Activated CD4-positive, alpha-beta memory T cell treated with anti-CD3 and anti-CD28 coated beads for 36 hours (primary cell): ENCODE measurements at regions of chr12 and their contacts with region 1.

Region 1: DNA sequence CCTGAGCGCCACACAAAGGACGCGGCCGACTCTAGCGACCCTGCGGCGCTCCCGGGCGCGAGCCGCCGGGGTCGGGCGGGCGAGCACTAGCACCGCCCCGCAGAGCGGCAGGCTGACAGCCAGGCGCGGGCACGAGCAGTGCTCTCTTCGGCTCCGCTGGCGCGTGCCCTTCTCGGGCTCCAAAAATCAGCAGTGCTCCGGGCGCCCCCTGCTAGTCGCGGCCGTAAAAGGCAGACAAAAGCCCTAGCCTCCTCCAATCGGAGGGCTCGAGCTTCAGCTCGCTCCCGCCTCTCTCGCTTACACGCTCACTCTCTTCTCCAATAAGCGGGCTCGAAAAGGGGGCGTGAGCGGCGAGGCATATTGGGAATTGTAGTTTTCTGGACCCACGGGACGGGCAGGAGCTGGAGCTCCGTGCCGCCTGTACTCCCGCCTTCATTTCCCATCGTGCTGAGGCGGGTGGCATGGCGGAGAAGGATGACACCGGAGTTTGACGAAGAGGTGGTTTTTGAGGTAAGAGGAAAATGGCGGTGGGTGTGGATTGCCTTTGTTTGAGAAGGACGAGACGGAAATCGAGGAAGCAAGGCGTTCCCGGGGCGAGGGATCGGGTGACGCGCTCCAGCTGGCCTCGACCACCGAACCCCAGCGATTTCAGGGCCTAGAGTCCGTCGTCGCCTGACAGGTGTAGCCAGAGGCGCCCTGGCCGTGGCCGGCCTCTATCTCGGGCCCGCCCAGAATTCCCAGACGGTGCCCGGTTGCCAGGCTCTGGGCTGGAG is at the starts of genes FGD6 and VEZT:
- DNase-seq: peak; percentile 99
- H3K4me3 Mint-ChIP-seq: peak within 1 kb of the TSS; percentile 89
- H3K27ac Mint-ChIP-seq: peak within 1 kb of the TSS; percentile 95
- H3K4me1 Mint-ChIP-seq: peaks cover 35% of the 10 kb centered on the region
- H3K27me3 Mint-ChIP-seq: no peaks in the 10 kb centered on the region
- total RNA-seq, gene FGD6: 0.78 to 1.1 TPM
- total RNA-seq, gene VEZT: 50.7 to 54.4 TPM

Region 2: GRCh38 chr12:94954029-94954685 is 263.4 kb before region 1 on chr12:
- CTCF ChIA-PET with region 1: no interaction called
- POLR2A ChIA-PET with region 1: no interaction called
- intact Hi-C with region 1: no loop called
- DNase-seq: no peak
- H3K4me3 Mint-ChIP-seq: no peak overlapping the region
- H3K27ac Mint-ChIP-seq: no peak overlapping the region
- H3K4me1 Mint-ChIP-seq: no peaks in the 10 kb centered on the region
- H3K27me3 Mint-ChIP-seq: peaks cover 6% of the 10 kb centered on the region

Region 3: DNA sequence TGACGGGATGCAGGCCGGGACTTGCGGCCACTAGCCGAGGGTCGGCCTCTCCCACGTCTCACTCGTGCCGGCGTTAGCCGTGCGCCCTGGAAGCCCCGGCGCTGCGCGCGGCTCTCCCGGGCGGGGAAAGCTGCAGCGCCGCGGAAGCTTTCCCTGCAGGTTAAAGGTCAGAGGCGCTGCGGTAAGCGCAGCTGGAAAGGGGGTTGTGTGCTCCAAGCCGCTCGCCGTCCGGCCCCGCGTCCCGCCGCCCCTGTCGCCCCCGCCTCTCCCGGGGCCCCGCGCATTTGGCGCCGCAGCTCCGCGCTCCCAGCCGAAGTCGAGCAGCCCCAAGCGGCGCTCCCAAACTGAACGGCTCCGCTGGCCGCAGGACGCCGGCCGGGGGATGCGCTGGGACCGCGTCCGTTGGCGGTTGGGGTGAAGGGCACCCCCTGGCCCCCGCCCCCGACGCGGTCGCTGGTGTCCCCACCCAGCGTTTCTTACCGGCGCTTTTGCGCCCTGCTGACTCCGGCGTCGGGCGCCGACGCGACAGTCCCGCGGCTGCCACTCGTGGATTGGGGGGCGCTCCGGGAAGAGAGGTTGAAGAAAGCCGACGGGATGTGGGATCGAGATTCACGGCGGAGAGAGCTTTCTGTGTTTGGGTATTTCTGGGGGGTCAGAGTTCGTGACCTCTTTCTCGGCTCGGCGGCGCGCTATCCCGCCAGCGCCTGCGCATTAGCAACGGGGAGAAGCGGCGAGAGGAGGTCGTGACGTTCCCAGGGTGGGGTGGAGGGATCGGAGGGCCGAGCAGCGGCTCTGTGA is 144.5 kb before region 1 on chr12 and contains the start of gene NR2C1:
- CTCF ChIA-PET with region 1: interaction called, 18 read pairs
- POLR2A ChIA-PET with region 1: interaction called, 11 read pairs
- intact Hi-C with region 1: loop called (anchors 1 kb)
- DNase-seq: peak; percentile 96
- H3K4me3 Mint-ChIP-seq: peak within 1 kb of the TSS; percentile 89
- H3K27ac Mint-ChIP-seq: peak within 1 kb of the TSS; percentile 89
- H3K4me1 Mint-ChIP-seq: peaks cover 20% of the 10 kb centered on the region
- H3K27me3 Mint-ChIP-seq: no peaks in the 10 kb centered on the region
- total RNA-seq, gene NR2C1: 25.5 to 27.1 TPM

Region 4: GRCh38 chr12:95117178-95117599 is 100.4 kb before region 1 on chr12:
- CTCF ChIA-PET with region 1: interaction called, 19 read pairs
- POLR2A ChIA-PET with region 1: no interaction called
- intact Hi-C with region 1: loop called (anchors 1 kb)
- DNase-seq: peak; percentile 53
- H3K4me3 Mint-ChIP-seq: no peak overlapping the region
- H3K27ac Mint-ChIP-seq: no peak overlapping the region
- H3K4me1 Mint-ChIP-seq: peaks cover 5% of the 10 kb centered on the region
- H3K27me3 Mint-ChIP-seq: no peaks in the 10 kb centered on the region

Region 5: DNA sequence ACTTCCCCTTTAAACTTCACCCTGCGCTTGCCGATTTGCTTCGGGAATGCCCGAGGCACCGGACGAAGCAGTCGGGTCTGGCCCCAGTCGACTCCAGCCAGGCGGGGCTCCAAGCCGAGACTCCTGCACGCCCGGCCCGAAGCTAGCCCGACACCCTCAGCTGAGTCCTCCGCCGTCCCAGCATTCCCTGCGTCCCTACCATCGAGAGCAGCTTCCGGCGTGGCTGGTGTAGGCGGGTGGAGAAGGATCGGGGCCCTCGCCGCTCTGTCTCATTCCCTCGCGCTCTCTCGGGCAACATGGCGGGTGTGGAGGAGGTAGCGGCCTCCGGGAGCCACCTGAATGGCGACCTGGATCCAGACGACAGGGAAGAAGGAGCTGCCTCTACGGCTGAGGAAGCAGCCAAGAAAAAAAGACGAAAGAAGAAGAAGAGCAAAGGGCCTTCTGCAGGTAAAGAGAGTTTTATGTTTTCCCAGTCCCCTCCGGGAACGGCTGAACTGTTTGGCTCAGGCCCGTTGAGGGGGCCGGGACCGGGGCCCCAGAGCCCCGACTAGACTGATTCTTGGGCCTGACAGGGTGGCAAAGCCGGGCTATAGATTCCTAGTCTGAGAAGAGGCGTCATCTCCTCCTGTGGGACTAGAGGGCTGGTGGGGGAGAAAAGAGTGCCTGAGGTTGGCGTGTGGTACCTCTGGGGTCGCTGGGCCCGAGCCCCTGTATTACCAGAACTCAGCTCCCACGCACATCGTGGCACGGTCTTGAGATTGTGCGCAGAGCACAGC is 256.5 kb after region 1 on chr12 and contains the start of gene METAP2:
- CTCF ChIA-PET with region 1: interaction called, 9 read pairs
- POLR2A ChIA-PET with region 1: interaction called, 16 read pairs
- intact Hi-C with region 1: loop called (anchors 1 kb)
- DNase-seq: peak; percentile 97
- H3K4me3 Mint-ChIP-seq: peak within 1 kb of the TSS; percentile 100
- H3K27ac Mint-ChIP-seq: peak within 1 kb of the TSS; percentile 97
- H3K4me1 Mint-ChIP-seq: peaks cover 37% of the 10 kb centered on the region
- H3K27me3 Mint-ChIP-seq: no peaks in the 10 kb centered on the region
- total RNA-seq, gene METAP2: 107 to 108 TPM

Region 6: GRCh38 chr12:95548539-95549391 is 331.2 kb after region 1 on chr12:
- CTCF ChIA-PET with region 1: no interaction called
- POLR2A ChIA-PET with region 1: no interaction called
- intact Hi-C with region 1: loop called (anchors 1 kb)
- DNase-seq: peak; percentile 71
- H3K4me3 Mint-ChIP-seq: peak overlapping the region; percentile 85
- H3K27ac Mint-ChIP-seq: peak overlapping the region; percentile 7
- H3K4me1 Mint-ChIP-seq: peaks cover 26% of the 10 kb centered on the region
- H3K27me3 Mint-ChIP-seq: peaks cover 20% of the 10 kb centered on the region

Region 7: DNA sequence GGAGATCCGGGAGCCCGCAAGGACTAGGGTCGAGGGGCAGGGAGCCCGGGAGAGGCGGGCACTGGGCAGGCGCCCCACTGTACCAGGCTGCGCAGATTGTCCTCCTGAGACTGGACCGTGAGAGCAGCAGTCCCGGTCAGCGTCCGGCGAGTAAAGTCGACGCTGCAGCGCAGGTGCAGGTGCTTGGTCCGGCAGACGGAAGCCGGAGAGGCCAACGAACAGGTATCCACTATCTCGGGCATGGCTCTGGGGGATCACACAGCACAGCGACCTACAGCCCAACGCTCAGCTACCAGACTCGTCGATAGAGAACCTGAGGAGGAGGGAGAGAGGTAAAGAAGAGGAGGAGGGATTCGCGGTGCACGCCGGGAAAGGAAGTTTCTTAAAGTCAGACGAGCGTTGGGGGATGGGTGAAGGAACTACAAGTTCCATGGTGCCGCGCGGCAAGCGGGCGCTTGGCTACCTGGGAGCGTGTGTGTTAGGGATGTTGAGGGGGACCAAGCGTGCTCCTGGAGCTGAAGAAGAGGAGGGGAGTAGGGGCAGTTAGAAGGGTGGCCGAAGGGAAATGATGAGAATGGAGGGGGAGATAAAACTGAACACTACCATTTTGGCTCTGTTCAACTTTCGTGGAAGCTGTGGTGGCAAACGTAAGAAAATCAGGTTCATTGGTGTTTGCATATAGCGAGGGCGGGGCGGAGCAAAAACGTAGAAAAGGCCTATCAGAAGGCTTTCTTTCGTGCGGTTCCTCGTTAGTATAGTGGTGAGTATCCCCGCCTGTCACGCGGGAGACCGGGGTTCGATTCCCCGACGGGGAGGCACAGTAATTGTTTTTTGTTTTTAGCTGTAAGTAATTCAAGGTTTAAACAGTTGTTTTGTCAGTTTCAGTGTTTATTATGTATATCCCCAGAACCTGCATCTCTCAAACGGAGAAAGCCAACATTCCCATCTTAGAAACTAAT is 818.0 kb after region 1 on chr12 and contains the start of gene LTA4H:
- CTCF ChIA-PET with region 1: no interaction called
- POLR2A ChIA-PET with region 1: no interaction called
- intact Hi-C with region 1: loop called (anchors 5 kb)
- DNase-seq: peak; percentile 97
- H3K4me3 Mint-ChIP-seq: no peak within 1 kb of the TSS
- H3K27ac Mint-ChIP-seq: no peak within 1 kb of the TSS
- H3K4me1 Mint-ChIP-seq: peaks cover 13% of the 10 kb centered on the region
- H3K27me3 Mint-ChIP-seq: no peaks in the 10 kb centered on the region
- total RNA-seq, gene LTA4H: 106 to 110 TPM